Heart left ventricle (tissue), 16 donors: ENCODE measurements at regions of chr17 and their contacts with region 1.

Region 1: DNA sequence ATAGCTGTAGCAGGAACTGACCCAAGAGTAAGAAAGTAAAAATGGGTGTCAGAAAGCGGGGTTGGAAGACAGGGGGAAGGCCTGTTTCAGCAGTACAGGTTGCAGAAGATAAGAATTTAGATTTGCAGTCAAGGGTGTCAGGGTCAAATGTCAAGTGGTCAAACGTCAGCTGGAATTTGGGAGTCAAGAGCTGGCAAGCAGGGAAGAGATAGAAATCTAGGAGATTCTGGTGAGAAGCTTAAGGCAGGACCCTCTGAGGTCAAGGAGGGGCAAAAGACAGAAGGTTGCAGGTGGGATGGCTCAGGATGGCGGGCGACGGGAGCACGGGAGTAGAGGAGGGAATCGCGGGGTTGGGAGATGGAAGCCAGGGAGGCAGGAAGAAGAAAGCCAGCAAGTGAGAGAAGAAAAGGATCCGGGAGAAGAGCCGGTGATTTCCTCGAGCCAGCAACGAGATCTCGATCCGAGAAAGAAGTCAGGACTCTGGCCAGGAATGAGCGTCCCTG is 335 bp downstream of the SLC25A35 start:
- DNase-seq: no peak
- ATAC-seq: peak; percentile 2 to 14 (median 9)
- H3K4me3 ChIP-seq: peak overlapping the region in 11 of 12 donors; percentile 54 to 85 (median 71)
- H3K27ac ChIP-seq: peak overlapping the region; percentile 79 to 99 (median 94)
- H3K4me1 ChIP-seq: peaks cover 0 to 22% (median 10%) of the 10 kb centered on the region in 12 donors
- H3K27me3 ChIP-seq: no peaks in the 10 kb centered on the region
- CTCF ChIP-seq: no peak
- POLR2A ChIP-seq: no peak

Region 2: DNA sequence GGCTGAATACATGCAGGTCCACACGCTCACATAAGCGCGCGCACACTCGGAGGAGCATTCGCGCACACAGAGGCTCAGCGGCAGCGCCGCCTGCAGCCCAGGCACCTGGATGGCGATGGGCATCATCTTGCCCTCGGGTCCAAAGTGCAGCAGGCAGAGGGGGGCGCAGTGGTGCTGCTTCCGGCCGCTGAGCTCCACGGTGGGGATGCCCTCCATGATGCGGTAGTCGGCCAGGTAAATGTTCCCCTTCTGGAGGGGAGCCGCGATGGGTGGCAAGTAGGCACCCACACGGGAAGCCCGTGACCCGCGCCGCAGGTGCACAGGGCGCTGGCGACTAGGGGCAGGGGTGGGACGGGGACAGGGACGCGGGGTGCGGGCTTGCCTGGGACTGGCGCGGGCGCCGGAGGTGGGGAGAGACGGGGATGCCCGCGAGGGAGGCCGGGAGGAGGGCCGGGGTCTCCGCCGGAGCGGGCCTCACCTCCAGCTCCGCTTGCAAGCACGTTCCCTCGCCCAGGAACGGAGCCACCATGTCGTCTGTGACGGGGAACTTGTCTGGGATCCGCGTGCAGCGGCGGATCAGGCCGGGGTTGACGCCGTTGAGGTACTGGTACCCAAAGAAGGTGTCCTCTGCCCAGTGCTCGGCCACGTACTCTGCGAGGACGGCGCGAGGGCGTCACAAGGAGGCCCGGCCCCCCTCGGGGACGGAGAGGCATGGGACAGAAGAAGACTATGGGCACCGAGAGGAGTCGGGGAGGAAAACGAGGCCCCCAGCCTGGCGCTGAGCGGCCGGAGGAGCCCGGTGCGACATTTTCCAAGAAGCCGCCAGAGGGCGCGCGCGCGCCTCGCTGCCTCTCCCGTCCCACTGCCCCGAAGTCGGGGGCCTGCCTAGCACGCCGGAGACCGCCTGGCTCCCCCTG is 215.3 kb before region 1 on chr17:
- intact Hi-C with region 1: loop called in 7 of 10 experiments (anchors 5 to 10 kb)
- DNase-seq: peak; percentile 60 to 86 (median 67)
- ATAC-seq: peak; percentile 72 to 93 (median 86)
- H3K4me3 ChIP-seq: peak overlapping the region; percentile 0 to 58 (median 43)
- H3K27ac ChIP-seq: no peak overlapping the region
- H3K4me1 ChIP-seq: peaks cover 0 to 17% (median 12%) of the 10 kb centered on the region in 12 donors
- H3K27me3 ChIP-seq: peaks cover 16 to 98% (median 63%) of the 10 kb centered on the region in 9 donors
- CTCF ChIP-seq: peak; percentile 87 to 99 (median 92)
- POLR2A ChIP-seq: no peak

Region 3: DNA sequence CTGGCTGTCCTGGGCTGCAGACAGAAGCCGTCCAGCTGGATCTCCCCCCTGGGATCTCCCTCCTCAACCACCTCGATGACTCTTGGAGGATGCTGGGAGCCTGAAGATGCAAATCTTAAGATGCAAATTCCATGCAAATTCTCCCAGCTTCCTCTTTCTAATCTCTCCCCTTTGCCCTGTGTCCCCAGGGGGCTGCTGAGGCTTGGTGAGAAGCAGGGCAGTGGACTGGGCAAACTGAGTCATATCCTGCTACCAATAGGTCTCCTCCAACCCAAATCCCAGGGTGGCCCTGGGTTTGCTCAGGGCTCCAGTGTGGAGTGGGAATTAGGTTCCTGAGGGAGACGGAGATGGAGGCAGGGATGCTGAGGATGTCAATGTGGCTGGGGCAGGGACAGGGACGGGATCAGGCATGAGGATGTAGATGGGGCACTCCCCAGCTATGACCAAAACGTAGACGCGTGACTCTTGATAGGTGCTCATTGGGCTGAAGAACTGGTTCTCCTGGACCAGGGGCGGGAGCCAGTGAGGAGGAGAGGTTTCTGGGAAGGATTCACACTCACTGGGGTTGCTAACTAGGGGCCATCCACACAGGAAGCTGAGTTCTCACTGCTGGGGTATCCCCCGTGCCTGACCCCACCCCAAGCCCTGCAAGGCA is 203.7 kb before region 1 on chr17:
- intact Hi-C with region 1: loop called in 5 of 10 experiments (anchors 10 kb)
- DNase-seq: peak in 1 of 5 donors; percentile 14
- ATAC-seq: no peak
- H3K4me3 ChIP-seq: no peak overlapping the region
- H3K27ac ChIP-seq: no peak overlapping the region
- H3K4me1 ChIP-seq: no peaks in the 10 kb centered on the region
- H3K27me3 ChIP-seq: peaks cover 0 to 52% (median 14%) of the 10 kb centered on the region in 9 donors
- CTCF ChIP-seq: no peak
- POLR2A ChIP-seq: no peak

Region 4: DNA sequence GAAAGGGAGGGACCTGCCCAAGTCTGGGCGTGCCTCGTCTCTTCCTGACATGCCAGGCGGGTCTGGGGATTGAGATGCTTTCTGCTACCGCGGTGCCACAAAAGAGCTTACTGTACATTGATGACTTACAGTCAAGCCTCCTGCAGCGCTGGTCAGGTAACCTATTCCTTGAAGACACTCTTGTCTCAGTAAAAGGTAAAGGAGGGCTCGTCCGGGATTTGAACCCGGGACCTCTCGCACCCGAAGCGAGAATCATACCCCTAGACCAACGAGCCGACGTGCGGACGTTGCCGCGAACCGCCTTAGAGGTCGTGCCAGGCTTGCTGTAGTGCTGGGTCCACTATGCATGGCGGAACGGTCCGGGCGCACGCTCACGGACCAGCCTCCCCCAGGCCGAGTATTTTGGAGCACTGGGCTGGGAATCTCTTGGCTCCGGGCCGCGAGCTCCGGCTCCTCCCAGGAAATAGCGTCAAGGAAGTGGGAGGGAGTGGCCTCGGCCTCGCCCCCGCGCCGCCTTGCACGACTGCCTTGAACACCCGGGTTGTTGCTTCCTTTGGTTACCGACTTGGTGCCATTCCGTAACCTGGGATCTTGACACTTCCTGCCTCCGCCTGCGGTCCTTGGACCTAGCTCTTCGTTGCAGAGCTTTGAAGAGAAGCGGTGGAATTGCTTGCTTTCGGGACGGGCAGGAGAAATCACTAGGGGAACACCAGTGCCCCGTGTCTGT is 72.1 kb before region 1 on chr17:
- intact Hi-C with region 1: loop called in 1 of 10 experiments (anchors 2 kb)
- DNase-seq: peak; percentile 94 to 97 (median 95)
- ATAC-seq: peak; percentile 70 to 81 (median 74)
- H3K4me3 ChIP-seq: peak overlapping the region; percentile 49 to 82 (median 69)
- H3K27ac ChIP-seq: peak overlapping the region; percentile 93 to 99 (median 98)
- H3K4me1 ChIP-seq: peaks cover 0 to 31% (median 14%) of the 10 kb centered on the region in 12 donors
- H3K27me3 ChIP-seq: no peaks in the 10 kb centered on the region
- CTCF ChIP-seq: no peak
- POLR2A ChIP-seq: peak in 1 of 2 donors; percentile 83

Region 5: DNA sequence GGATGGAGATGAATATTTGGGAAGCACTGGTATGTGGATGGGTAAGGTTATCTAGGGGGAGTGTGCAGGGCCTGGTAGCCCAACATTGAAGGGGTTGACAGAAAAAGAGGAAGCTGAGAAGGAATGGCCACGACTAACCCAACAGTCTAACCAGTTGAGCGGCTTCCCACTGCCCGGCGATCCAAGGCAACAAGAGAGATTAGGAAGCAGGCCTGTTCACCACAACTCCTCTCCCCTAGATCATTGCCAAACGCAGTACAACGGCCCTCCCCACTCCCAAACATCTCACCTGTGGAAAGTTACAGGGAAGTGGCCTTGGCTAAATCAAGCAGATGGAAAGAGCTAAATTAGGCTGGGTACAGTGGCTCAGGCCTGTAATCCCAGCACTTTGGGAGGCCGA is 17.5 kb before region 1 on chr17:
- intact Hi-C with region 1: no loop called
- DNase-seq: no peak
- ATAC-seq: no peak
- H3K4me3 ChIP-seq: no peak overlapping the region
- H3K27ac ChIP-seq: no peak overlapping the region
- H3K4me1 ChIP-seq: no peaks in the 10 kb centered on the region
- H3K27me3 ChIP-seq: no peaks in the 10 kb centered on the region
- CTCF ChIP-seq: no peak
- POLR2A ChIP-seq: no peak

Region 6: DNA sequence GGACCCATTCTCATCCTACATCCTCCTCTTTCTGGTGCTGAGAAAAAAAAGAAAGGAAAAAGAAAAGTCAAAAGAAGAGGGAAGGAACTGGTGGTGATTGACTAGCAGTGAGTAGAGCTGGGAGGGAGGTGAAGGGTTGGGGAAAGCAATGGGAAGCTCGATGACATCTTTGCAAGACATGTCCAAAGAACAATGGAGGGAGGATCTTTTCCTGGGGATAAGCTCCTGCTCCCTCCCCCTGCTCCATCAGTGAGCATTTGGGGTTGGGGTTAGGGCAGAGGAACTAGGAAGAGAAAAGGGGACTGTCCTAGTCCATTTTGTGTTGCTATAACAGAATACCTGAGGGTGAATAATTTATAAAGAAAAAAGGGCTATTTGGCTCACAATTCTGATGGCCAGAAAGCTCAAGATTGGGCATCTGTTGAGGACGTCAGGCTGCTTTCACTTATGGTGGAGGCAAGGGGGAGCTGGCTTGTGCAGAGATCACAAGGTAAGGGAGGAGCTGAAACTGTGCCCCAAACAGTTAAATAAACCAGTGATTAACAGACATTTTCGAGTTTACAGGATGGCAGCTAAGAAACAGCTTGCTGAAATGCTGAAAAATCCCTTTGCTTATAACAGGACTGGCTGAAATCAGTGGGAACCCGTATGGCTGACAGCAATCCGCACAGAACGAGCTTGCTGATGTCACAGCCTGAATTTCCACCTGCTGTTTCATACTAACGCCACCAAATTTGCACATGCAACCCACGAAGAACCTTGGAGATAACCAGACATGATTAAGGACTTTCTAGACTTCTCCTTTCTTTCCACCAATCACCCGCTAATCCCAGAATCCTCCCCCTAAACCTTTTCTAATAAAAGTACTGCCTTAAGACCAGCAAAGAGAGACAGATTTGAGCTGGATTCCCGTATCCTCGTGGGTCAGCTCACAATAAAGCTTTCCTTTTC is 43.2 kb after region 1 on chr17:
- intact Hi-C with region 1: no loop called
- DNase-seq: no peak
- ATAC-seq: peak in 1 of 4 donors; percentile 38
- H3K4me3 ChIP-seq: no peak overlapping the region
- H3K27ac ChIP-seq: no peak overlapping the region
- H3K4me1 ChIP-seq: no peaks in the 10 kb centered on the region
- H3K27me3 ChIP-seq: no peaks in the 10 kb centered on the region
- CTCF ChIP-seq: no peak
- POLR2A ChIP-seq: no peak